Ovary (tissue), 10 donors: ENCODE measurements at regions of chr15 and their contacts with region 1.

Region 1: DNA sequence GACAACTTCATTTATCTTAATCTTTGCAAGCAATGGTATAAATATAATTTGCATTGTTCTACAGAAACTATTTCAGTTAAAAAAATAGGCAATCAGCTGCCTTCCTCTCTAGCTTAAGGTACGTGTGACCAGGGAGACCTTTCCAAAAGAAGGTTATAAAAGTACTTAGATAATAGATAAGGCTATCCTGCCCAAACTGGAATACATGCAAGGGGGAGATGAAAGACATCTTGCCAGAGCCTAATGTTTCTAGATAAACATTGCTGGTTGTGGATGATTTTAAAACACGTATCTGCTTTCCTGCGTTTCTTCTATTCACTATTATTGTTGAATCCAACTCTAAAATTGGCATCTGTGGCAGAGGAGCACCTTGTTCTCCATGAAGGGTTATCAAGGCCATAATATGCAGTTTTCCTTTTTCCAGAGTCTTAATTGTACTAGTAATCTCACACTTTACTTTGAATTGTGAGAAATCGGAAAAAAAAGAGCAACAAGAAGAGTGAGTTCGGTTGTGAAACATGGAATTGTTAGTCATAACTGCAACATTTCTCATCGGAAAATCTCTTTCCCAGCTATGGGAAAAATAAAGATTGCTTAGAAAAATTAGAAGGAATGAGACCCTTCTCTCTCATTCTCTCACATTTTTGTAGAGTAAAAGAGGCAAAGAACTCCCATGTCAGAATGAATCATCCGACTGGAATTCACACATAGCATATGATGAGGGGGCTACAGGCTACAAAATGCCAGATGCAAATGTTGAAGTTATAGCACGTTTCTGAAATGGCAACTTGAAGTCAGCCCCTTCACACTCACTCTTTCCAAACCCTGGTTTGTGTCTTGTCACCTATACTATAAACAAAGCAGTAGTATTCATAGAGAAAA is 936.1 kb upstream of the NR2F2 start:
- DNase-seq: no peak
- H3K4me3 ChIP-seq: no peak overlapping the region
- H3K27ac ChIP-seq: peak overlapping the region; percentile 23 to 48
- H3K4me1 ChIP-seq: peaks cover 5% of the 10 kb centered on the region
- H3K27me3 ChIP-seq: no peaks in the 10 kb centered on the region
- CTCF ChIP-seq: no peak
- EP300 ChIP-seq: no peak
- POLR2A ChIP-seq: no peak

Region 2: DNA sequence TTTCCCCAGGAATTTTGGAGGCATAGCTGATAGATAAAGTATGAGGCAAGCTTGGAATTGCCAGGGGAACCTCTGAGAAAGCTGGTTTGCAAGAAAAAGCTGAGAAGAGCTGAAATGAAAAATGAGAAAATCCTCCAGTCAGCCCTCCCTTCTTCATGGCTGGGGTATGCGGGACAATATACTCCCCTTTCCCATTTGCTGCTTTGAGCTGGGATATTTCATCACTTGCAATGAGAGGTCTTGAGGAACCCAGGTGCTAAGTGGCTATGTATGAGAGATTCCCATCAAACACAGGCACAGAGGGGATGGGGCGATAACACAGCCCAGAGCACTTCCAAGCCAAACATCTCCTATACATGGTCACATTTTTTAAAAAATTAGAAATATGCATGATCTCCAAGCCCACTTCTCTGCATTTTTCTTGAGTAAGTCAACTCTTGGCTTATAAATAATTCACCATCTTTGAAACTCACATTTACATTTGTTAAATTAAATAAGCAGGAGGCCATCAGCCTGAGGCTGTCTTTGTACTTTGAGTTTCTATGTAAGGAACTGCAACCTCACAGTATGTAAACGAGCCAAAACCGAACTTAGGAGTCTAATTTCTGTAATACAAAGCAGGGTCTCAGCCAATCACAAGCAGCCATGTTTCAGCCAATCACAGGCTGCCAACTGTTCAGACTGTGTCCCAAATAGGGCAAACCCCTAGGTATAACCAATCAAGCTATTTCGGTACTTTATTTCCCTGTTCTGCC is 47.5 kb before region 1 on chr15:
- intact Hi-C with region 1: no loop called
- DNase-seq: no peak
- H3K4me3 ChIP-seq: no peak overlapping the region
- H3K27ac ChIP-seq: no peak overlapping the region
- H3K4me1 ChIP-seq: peaks cover 2% of the 10 kb centered on the region
- H3K27me3 ChIP-seq: no peaks in the 10 kb centered on the region
- CTCF ChIP-seq: no peak
- EP300 ChIP-seq: no peak
- POLR2A ChIP-seq: no peak

Region 3: DNA sequence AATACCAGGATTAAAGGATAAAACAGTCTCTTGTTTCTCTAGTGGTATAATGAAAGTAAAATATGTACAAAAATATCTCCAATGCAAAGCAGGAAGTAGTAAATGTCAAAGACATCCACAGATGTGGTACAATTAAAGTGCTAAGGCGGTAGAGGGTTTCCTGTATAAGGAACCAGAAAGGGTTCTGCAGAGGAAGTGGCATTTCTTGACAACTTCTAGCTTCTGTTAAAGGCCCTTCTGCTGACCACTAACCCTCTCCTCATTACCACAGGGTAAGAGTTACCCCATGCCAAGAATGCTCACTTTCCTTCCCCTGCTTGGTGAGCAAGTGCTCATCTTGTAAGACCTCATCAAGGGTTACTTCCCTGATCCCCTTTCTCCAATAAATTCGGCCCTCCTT is 52.4 kb after region 1 on chr15:
- intact Hi-C with region 1: loop called in 1 of 4 experiments (anchors 10 kb)
- DNase-seq: no peak
- H3K4me3 ChIP-seq: no peak overlapping the region
- H3K27ac ChIP-seq: peak overlapping the region in 1 of 2 donors; percentile 14
- H3K4me1 ChIP-seq: peaks cover 3% of the 10 kb centered on the region
- H3K27me3 ChIP-seq: no peaks in the 10 kb centered on the region
- CTCF ChIP-seq: no peak
- EP300 ChIP-seq: no peak
- POLR2A ChIP-seq: no peak